Prostate gland (tissue), 2 donors: ENCODE measurements at regions of chr1 and their contacts with region 1.

Region 1: GRCh38 chr1:35202048-35202719 is 9.2 kb upstream of the SFPQ start:
- DNase-seq: peak; percentile 63
- H3K4me3 ChIP-seq: no peak overlapping the region
- H3K27ac ChIP-seq: no peak overlapping the region
- H3K4me1 ChIP-seq: no peaks in the 10 kb centered on the region
- H3K27me3 ChIP-seq: no peaks in the 10 kb centered on the region
- CTCF ChIP-seq: peak; percentile 60 to 84 (median 74)
- POLR2A ChIP-seq: no peak

Region 2: DNA sequence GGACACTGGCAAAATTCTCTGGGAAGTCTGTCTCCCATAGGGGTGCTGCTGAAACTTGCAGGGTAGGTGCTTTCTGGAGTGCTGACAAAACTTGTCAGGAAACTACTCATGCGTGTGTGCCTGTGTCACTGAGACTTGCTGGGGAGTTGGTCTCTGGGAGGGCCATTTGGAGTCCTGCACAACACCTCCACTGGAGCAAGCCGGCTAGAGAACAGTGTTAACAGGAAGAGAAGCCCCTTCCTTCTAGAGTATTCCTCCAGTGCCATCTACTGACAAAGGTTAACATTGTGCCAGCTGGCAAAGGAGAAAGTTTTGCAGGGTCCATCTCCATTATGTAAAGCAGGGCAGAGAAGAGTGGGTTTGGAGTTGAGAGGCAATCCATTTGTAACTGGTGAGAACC is 96.3 kb after region 1 on chr1:
- intact Hi-C with region 1: loop called (anchors 2 kb)
- DNase-seq: peak; percentile 40
- H3K4me3 ChIP-seq: no peak overlapping the region
- H3K27ac ChIP-seq: no peak overlapping the region
- H3K4me1 ChIP-seq: no peaks in the 10 kb centered on the region
- H3K27me3 ChIP-seq: no peaks in the 10 kb centered on the region
- CTCF ChIP-seq: peak in 3 of 4 experiments; percentile 29 to 49 (median 36)
- POLR2A ChIP-seq: no peak